ENCODE measurements at regions of chr18 and their contacts with region 1.

Region 1: GRCh38 chr18:35040988-35041814 is at the start of gene MAPRE2:
- DNase-seq: peak; percentile 100
- H3K4me3 Mint-ChIP-seq: peak within 1 kb of the TSS; percentile 98
- H3K27ac Mint-ChIP-seq: peak within 1 kb of the TSS; percentile 98
- H3K4me1 Mint-ChIP-seq: peaks cover 54% of the 10 kb centered on the region
- H3K27me3 Mint-ChIP-seq: no peaks in the 10 kb centered on the region
- total RNA-seq, gene MAPRE2: 46.8 and 52.5 TPM in 2 replicates

Region 2: DNA sequence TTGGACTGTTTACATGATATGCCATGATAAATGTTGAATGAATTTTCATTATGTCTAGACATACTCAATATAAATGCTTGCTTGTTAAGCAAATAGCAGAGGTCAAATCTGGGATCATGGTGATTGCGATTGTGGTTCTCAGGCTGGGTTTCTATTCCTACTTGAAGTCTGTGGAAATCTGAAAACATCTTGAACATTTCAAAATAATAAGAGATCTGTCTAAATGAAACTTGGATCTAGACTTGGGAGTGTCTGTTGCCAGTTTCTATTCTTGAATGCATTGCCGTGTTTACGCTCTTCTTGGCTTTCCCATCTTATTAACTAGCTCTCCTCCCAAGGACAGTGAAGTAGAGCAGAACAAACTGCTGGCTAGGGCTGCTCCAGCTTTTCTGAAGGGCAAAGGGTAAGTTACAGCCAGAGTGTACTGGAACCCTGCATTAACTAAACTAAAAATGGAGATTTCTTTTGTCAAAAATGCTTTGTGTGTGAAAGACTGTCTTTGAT is 203.4 kb before region 1 on chr18:
- intact Hi-C with region 1: no loop called
- DNase-seq: no peak
- H3K4me3 Mint-ChIP-seq: no peak overlapping the region
- H3K27ac Mint-ChIP-seq: no peak overlapping the region
- H3K4me1 Mint-ChIP-seq: peaks cover 8% of the 10 kb centered on the region
- H3K27me3 Mint-ChIP-seq: peaks cover 5% of the 10 kb centered on the region

Region 3: GRCh38 chr18:34976899-34977837 is 64.0 kb before region 1 on chr18:
- intact Hi-C with region 1: loop called (anchors 1 kb)
- DNase-seq: peak; percentile 90
- H3K4me3 Mint-ChIP-seq: peak overlapping the region; percentile 82
- H3K27ac Mint-ChIP-seq: no peak overlapping the region
- H3K4me1 Mint-ChIP-seq: peaks cover 23% of the 10 kb centered on the region
- H3K27me3 Mint-ChIP-seq: peaks cover 39% of the 10 kb centered on the region

Region 4: GRCh38 chr18:35029770-35030169 is 11.4 kb before region 1 on chr18:
- intact Hi-C with region 1: loop called (anchors 1 kb)
- DNase-seq: no peak
- H3K4me3 Mint-ChIP-seq: peak overlapping the region; percentile 89
- H3K27ac Mint-ChIP-seq: peak overlapping the region; percentile 97
- H3K4me1 Mint-ChIP-seq: peaks cover 40% of the 10 kb centered on the region
- H3K27me3 Mint-ChIP-seq: no peaks in the 10 kb centered on the region

Region 5: DNA sequence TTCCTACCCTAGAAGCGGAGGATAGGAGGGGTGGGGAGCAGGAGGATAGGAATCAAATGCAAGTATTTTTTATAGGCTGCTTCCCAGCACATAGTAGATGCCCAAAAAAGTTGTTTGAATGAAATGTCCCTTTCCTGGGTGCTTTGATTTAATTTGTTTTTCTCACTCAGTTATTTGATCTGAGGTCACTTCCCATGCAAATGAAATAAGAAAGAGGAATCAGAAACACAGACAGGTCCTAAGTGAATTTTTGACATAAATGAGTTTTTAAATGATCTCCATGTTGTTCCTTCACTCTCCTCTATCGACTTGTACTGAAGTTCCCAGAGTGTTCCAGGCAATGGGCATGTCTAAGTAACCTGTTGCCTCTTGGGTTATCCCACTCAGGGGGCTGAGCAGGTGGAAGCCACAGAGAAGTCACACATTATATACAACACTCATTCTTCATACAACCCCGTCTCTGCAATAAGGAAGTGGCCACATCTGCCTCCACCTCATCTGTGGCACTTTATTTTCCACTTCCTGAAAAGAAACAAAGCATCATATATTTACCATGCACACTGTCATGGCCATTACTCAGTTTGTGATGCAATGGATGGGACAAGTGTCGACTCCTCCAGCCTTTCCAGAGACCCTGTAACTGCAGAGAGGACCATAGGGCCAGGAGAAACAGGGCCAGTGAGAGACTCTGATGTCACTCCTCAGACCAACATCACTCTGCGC is 117.7 kb after region 1 on chr18:
- intact Hi-C with region 1: loop called (anchors 1 kb)
- DNase-seq: peak; percentile 77
- H3K4me3 Mint-ChIP-seq: peak overlapping the region; percentile 30
- H3K27ac Mint-ChIP-seq: peak overlapping the region; percentile 88
- H3K4me1 Mint-ChIP-seq: peaks cover 24% of the 10 kb centered on the region
- H3K27me3 Mint-ChIP-seq: no peaks in the 10 kb centered on the region

Region 6: GRCh38 chr18:35343936-35344735 is 302.9 kb after region 1 on chr18 and contains the start of gene ZNF24:
- intact Hi-C with region 1: loop called (anchors 2 kb)
- DNase-seq: peak; percentile 98
- H3K4me3 Mint-ChIP-seq: peak within 1 kb of the TSS; percentile 100
- H3K27ac Mint-ChIP-seq: peak within 1 kb of the TSS; percentile 94
- H3K4me1 Mint-ChIP-seq: peaks cover 33% of the 10 kb centered on the region
- H3K27me3 Mint-ChIP-seq: peaks cover 1% of the 10 kb centered on the region
- total RNA-seq, gene ZNF24: 53.9 and 57.8 TPM in 2 replicates

Region 7: DNA sequence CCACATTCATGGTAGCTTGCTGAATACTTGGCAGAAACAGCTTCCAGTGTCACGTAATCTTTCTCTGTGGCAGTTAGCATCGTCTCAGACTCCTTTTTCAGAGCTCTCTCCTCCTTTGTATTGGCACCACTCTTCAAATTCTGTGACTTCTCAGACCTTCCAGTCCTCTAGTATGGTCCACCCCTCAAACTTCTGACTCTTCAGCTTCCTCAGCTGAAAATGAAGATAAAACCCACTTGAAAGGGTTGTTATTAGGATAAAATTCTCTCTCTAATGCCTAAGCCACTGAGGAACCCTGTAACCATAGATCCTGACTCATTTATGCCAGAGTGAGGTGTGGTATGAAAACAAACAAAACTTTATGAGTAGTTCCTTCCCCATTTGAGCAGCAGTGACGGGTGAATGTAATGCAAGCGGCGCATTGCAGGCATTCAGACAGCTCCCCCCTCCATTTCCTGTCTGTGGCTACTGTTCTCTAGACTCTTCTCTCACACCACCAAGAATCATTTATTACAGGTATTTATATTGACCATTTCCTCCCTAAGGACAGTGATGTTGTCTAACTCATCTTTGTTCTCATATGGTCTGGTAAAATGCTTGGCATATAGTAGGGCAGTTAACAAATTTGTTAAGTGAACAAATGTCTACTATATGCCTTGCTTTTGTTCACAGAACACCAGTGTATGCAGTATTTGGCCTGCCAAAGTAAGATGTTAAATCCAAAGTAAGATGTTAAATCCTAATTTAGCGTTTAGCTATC is 575.6 kb after region 1 on chr18:
- intact Hi-C with region 1: loop called (anchors 10 kb)
- DNase-seq: peak; percentile 85
- H3K4me3 Mint-ChIP-seq: no peak overlapping the region
- H3K27ac Mint-ChIP-seq: no peak overlapping the region
- H3K4me1 Mint-ChIP-seq: peaks cover 2% of the 10 kb centered on the region
- H3K27me3 Mint-ChIP-seq: no peaks in the 10 kb centered on the region